Activated CD4-positive, alpha-beta T cell treated with anti-CD3 and anti-CD28 coated beads for 36 hours (primary cell): ENCODE measurements at regions of chr1 and their contacts with region 1.

Region 1: DNA sequence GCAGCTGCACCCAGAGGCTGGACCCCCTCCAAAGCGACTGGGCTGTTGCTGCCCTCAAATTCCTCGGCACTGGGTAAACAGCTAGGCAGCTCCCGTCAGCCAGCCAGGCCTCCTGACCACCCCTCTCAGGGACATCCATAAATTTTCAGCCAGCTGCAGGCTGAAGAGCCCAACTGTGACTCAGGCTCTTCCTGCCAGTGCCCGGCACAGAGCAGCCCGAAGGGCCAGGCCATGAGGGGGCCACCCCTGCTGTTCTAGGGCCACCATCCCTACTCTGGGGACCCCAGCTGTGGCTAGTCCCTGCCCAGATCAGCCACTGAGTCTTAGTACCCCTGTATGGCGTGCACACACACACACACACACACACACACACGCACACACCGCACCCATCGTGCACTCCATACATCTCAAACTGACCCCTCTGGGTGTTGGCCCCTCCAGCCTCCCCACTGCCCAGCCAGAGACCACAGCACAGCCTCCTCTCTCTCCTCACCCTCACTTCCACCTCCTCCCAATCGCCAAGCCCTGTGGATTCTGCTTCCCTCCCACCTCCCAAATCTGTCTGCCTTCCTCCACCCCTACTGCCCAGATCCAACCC is 6.2 kb upstream of the LAPTM5 start:
- DNase-seq: no peak
- ATAC-seq: no peak
- H3K4me3 Mint-ChIP-seq: no peak overlapping the region
- H3K27ac Mint-ChIP-seq: peak overlapping the region; percentile 48
- H3K4me1 Mint-ChIP-seq: peaks cover 79% of the 10 kb centered on the region
- H3K27me3 Mint-ChIP-seq: no peaks in the 10 kb centered on the region

Region 2: GRCh38 chr1:30732277-30732996 is 31.3 kb before region 1 on chr1:
- CTCF ChIA-PET with region 1: interaction called, 7 read pairs
- POLR2A ChIA-PET with region 1: interaction called, 3 read pairs
- intact Hi-C with region 1: loop called in 1 of 2 experiments (anchors 1 kb)
- DNase-seq: no peak
- ATAC-seq: peak; percentile 25
- H3K4me3 Mint-ChIP-seq: no peak overlapping the region
- H3K27ac Mint-ChIP-seq: peak overlapping the region; percentile 60
- H3K4me1 Mint-ChIP-seq: peaks cover 11% of the 10 kb centered on the region
- H3K27me3 Mint-ChIP-seq: no peaks in the 10 kb centered on the region

Region 3: GRCh38 chr1:30816211-30817076 is 52.7 kb after region 1 on chr1:
- CTCF ChIA-PET with region 1: no interaction called
- POLR2A ChIA-PET with region 1: no interaction called
- intact Hi-C with region 1: no loop called
- DNase-seq: no peak
- ATAC-seq: peak; percentile 53
- H3K4me3 Mint-ChIP-seq: no peak overlapping the region
- H3K27ac Mint-ChIP-seq: no peak overlapping the region
- H3K4me1 Mint-ChIP-seq: no peaks in the 10 kb centered on the region
- H3K27me3 Mint-ChIP-seq: peaks cover 32% of the 10 kb centered on the region